ENCODE measurements at regions of chr5 and their contacts with region 1.

Region 1: DNA sequence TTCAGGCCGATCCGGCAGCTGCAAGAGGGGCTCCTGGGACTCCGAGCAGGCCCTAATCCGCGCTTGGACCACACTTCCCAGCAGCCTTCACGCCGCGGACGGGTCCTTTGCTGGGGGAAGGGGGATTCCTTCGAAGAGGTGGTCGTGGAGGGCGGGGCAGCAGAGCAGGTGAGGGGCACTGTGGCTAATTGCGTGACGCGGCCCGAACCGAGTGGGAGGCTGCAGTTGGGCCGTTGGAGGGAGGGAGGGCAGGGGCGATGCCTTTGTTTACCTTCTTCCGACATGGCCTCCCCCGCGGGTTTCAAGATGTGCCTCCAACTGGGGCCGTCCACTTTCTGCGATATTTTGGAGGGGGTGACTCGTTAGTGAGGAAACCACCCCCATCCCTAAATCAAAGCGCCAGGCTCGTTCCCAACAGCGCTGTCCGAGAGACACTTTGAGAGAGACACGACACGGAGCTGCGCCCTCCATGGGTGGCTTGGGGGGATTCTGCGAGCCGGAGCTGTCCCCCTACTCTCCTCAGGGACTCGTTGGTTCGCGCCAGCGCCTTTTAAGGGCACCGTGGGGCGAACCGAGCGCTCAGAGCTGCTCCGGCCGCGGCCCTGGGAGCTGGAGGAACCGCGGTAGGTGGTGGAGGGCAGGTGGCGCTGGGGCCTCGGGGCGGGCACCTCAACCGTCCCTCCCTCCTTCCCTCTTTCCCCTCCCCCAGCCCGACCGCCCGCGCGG is at the start of gene FAM53C:
- DNase-seq: peak; percentile 91
- H3K4me3 Mint-ChIP-seq: peak within 1 kb of the TSS; percentile 91
- H3K27ac Mint-ChIP-seq: peak within 1 kb of the TSS; percentile 98
- H3K4me1 Mint-ChIP-seq: peaks cover 37% of the 10 kb centered on the region
- H3K27me3 Mint-ChIP-seq: no peaks in the 10 kb centered on the region
- total RNA-seq, gene FAM53C: 24.4 and 26.1 TPM in 2 replicates

Region 2: DNA sequence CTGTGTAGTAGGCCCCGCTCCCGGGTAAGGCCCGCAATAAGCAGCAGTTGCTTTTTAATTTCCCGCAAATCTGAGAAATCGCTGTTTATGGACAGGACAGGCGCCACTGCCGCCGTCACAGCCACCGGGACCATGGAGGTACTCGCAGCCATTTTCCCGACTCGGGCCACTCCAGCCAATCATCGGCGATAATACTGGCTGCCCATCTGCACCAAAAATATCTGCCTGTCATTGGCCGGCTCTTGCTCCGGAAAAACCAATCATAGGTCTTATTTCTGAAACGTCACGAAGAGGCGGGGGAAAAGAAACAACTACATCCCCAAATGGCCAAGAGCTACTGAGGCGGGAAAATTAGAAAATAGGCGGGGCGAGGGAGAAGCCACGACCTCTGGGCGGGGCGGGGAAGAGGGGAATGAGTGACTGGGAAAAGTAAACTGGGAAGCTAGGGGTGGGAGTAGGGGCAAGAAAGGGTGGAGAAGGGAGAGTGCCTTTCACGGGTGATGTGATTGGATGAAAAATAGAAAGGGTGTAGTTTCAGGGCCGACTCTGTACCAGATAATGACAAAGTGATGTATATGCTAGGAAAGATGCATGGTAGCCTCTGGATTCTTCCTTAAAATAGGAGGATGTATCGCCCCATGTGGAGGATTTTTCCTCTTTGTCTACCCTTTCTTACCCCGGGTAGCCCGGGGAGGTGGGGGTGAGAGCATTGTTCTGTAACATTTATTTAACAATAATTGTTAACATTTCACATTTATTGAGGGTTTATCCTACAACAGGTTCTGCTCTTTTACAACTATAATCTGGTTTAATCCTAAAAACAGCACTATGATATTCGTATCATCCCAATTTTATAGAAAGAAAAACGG is 124.5 kb before region 1 on chr5 and contains the start of gene CDC23:
- intact Hi-C with region 1: loop called (anchors 1 kb)
- DNase-seq: peak; percentile 90
- H3K4me3 Mint-ChIP-seq: peak within 1 kb of the TSS; percentile 97
- H3K27ac Mint-ChIP-seq: peak within 1 kb of the TSS; percentile 94
- H3K4me1 Mint-ChIP-seq: peaks cover 11% of the 10 kb centered on the region
- H3K27me3 Mint-ChIP-seq: no peaks in the 10 kb centered on the region
- total RNA-seq, gene CDC23: 41.5 and 45.8 TPM in 2 replicates

Region 3: DNA sequence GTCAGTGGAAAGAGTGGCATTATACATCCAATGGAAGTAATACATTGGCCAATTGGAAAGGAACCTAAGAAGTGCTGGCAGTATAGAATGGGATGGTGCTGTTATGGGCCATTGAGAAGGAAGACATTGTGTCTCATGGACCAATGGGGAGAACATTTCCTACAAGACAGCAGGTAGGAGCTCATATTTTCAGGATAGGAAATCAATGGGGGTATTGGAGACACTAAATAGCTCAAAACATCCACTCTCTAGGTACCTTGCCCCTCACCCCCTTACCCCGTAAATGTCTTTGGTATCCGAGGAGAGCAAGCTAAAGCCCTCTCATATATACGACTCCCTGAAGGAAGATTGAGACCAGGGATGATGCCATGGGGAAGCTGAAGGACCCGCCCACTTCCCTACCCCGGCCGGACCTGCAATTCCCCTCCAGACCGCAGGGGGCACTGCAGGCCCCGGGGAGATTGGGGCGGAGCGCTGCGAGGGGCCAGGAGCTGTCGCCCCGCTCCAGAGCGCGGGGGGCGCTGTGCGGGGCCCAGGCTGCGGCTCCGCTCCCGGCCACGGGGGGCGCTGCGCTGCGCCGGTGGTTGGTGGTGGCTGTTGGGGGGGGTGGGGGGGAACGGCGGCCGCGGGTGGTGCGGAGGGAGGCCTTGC is 14.3 kb after region 1 on chr5 and contains the start of gene KDM3B:
- intact Hi-C with region 1: loop called (anchors 1 kb)
- DNase-seq: peak; percentile 93
- H3K4me3 Mint-ChIP-seq: peak within 1 kb of the TSS; percentile 97
- H3K27ac Mint-ChIP-seq: peak within 1 kb of the TSS; percentile 94
- H3K4me1 Mint-ChIP-seq: peaks cover 37% of the 10 kb centered on the region
- H3K27me3 Mint-ChIP-seq: no peaks in the 10 kb centered on the region
- total RNA-seq, gene KDM3B: 52.8 and 54.5 TPM in 2 replicates